ENCODE measurements at regions of chr15 and their contacts with region 1.

Region 1: GRCh38 chr15:39887832-39888231 is 32.2 kb downstream of the GPR176 start:
- DNase-seq: peak in 2 of 10 donors; percentile 11 to 28

Region 2: GRCh38 chr15:39976291-39977274 is 88.8 kb after region 1 on chr15:
- intact Hi-C with region 1: loop called (anchors 10 kb)
- DNase-seq: peak; percentile 66 to 97 (median 78)

Measured in posterior cingulate gyrus (tissue), 11 donors.